Activated CD4-positive, alpha-beta T cell treated with anti-CD3 and anti-CD28 coated beads, Interleukin-2, amount 10 ng/mL, durations not matched to agents 24 days and 14 days (primary cell): ENCODE measurements at regions of chr6 and their contacts with region 1.

Region 1: GRCh38 chr6:73653571-73654424 is at the start of gene SLC17A5:
- DNase-seq: peak; percentile 96
- H3K4me3 Mint-ChIP-seq: peak within 1 kb of the TSS; percentile 96
- H3K27ac Mint-ChIP-seq: peak within 1 kb of the TSS; percentile 97
- H3K4me1 Mint-ChIP-seq: peaks cover 25% of the 10 kb centered on the region
- H3K27me3 Mint-ChIP-seq: no peaks in the 10 kb centered on the region
- total RNA-seq, gene SLC17A5: 4.9 TPM in 2 replicates

Region 2: DNA sequence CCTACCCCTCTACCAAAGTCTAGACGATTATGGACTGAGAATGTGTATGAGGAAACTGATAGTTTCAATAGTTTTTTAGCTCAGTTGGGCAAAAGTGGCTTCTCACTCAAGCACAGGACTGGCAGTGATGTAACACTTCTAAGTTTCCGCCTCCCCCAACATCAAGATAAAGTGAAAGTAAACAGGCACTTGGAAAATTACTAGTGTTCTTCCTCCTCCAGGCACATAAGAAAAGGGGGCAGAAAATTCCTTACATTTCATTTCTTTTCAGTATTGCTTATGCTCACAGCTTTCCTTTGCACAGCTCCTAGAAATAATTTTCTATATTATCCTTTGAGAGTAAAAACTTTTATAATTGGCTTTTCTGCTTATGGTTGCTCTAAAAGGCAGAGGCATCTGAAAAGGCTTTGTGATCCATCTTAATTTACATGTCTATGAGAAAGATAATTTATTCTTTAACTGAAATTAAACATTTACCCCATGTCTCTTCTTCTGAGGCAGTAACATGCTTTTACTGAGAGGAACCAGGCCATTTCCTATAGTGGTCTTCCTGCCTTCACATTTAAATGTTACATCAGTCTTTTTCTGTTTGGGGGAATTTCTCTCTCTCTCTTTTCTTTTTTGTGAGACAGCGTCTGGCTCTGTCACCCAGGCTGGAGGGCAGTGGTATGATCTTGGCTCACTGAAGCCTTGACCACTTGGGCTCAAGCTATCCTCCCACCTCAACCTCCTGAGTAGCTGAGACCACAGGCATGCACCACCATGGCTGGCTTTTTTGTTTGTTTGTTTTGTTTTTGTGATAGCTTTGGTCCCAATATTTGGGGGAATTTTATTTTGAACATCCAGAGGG is 68.0 kb before region 1 on chr6:
- intact Hi-C with region 1: loop called (anchors 1 kb)
- DNase-seq: peak; percentile 84
- H3K4me3 Mint-ChIP-seq: peak overlapping the region; percentile 91
- H3K27ac Mint-ChIP-seq: peak overlapping the region; percentile 98
- H3K4me1 Mint-ChIP-seq: peaks cover 22% of the 10 kb centered on the region
- H3K27me3 Mint-ChIP-seq: no peaks in the 10 kb centered on the region

Region 3: GRCh38 chr6:73732845-73733675 is 79.3 kb after region 1 on chr6:
- intact Hi-C with region 1: loop called (anchors 1 kb)
- DNase-seq: peak; percentile 93
- H3K4me3 Mint-ChIP-seq: no peak overlapping the region
- H3K27ac Mint-ChIP-seq: no peak overlapping the region
- H3K4me1 Mint-ChIP-seq: peaks cover 31% of the 10 kb centered on the region
- H3K27me3 Mint-ChIP-seq: no peaks in the 10 kb centered on the region

Region 4: GRCh38 chr6:74343804-74344203 is 690.0 kb after region 1 on chr6:
- intact Hi-C with region 1: no loop called
- DNase-seq: no peak
- H3K4me3 Mint-ChIP-seq: no peak overlapping the region
- H3K27ac Mint-ChIP-seq: no peak overlapping the region
- H3K4me1 Mint-ChIP-seq: no peaks in the 10 kb centered on the region
- H3K27me3 Mint-ChIP-seq: no peaks in the 10 kb centered on the region